AG04449 (cell line): ENCODE measurements at regions of chr17 and their contacts with region 1.

Region 1: GRCh38 chr17:63478791-63479494 is 2.1 kb downstream of the ACE start:
- DNase-seq: peak; percentile 65
- H3K4me3 ChIP-seq: peak overlapping the region; percentile 8; the same call in 1 of the 2 replicates
- CTCF ChIP-seq: peak; percentile 99

Region 2: GRCh38 chr17:63434876-63435684 is 43.9 kb before region 1 on chr17:
- CTCF ChIA-PET with region 1: interaction called, 251 read pairs
- POLR2A ChIA-PET with region 1: interaction called, 3 read pairs
- DNase-seq: no peak
- H3K4me3 ChIP-seq: no peak overlapping the region
- CTCF ChIP-seq: peak; percentile 8

Region 3: GRCh38 chr17:63445979-63446691 is 32.8 kb before region 1 on chr17 and contains the start of gene CYB561:
- CTCF ChIA-PET with region 1: interaction called, 21 read pairs
- POLR2A ChIA-PET with region 1: no interaction called
- DNase-seq: no peak
- H3K4me3 ChIP-seq: peak within 1 kb of the TSS; percentile 50
- CTCF ChIP-seq: peak; percentile 66

Region 4: GRCh38 chr17:63455417-63455816 is 23.5 kb before region 1 on chr17:
- CTCF ChIA-PET with region 1: interaction called, 10 read pairs
- POLR2A ChIA-PET with region 1: interaction called, 3 read pairs
- DNase-seq: no peak
- H3K4me3 ChIP-seq: no peak overlapping the region
- CTCF ChIP-seq: no peak

Region 5: GRCh38 chr17:63464691-63465236 is 14.2 kb before region 1 on chr17:
- CTCF ChIA-PET with region 1: interaction called, 71 read pairs
- POLR2A ChIA-PET with region 1: interaction called, 3 read pairs
- DNase-seq: no peak
- H3K4me3 ChIP-seq: no peak overlapping the region
- CTCF ChIP-seq: no peak

Region 6: GRCh38 chr17:63490321-63490720 is 11.4 kb after region 1 on chr17:
- CTCF ChIA-PET with region 1: interaction called, 34 read pairs
- POLR2A ChIA-PET with region 1: no interaction called
- DNase-seq: no peak
- H3K4me3 ChIP-seq: no peak overlapping the region
- CTCF ChIP-seq: no peak

Region 7: GRCh38 chr17:63497708-63498483 is 19.0 kb after region 1 on chr17:
- CTCF ChIA-PET with region 1: interaction called, 34 read pairs
- POLR2A ChIA-PET with region 1: no interaction called
- DNase-seq: no peak
- H3K4me3 ChIP-seq: no peak overlapping the region
- CTCF ChIP-seq: peak; percentile 24